AG04450 (cell line): ENCODE measurements at regions of chr12 and their contacts with region 1.

Region 1: DNA sequence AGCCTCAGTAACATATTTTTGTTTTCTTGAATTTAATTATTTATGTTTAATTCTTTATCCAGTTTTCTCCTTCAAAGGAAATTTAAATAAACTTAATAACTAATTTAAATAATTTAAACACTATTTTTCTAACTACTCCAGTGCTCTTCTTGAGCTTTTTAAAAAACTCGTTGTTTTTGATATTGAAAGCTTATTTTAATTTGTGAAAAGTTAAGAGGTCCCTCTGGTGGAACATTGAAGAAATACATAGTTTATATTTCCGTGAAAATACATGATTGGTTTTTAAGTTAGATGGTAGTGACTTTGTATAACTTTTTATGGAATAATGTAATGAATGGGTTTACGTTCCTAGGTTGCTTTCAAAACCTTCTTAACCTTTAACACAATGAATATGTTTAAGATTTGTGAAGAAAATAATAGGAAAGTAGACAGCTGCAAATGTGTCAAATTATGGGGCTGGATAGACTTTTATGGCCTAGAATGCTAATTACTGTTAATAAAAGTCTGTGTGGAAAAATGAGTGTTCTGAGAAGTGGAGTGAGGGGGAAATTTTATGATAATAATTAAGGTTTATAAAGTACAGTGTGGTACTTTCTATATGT is 45.9 kb upstream of the MSRB3 start:
- DNase-seq: no peak
- H3K4me3 ChIP-seq: no peak overlapping the region
- H3K27ac ChIP-seq: no peak overlapping the region
- H3K27me3 ChIP-seq: no peaks in the 10 kb centered on the region
- CTCF ChIP-seq: peak; percentile 52

Region 2: DNA sequence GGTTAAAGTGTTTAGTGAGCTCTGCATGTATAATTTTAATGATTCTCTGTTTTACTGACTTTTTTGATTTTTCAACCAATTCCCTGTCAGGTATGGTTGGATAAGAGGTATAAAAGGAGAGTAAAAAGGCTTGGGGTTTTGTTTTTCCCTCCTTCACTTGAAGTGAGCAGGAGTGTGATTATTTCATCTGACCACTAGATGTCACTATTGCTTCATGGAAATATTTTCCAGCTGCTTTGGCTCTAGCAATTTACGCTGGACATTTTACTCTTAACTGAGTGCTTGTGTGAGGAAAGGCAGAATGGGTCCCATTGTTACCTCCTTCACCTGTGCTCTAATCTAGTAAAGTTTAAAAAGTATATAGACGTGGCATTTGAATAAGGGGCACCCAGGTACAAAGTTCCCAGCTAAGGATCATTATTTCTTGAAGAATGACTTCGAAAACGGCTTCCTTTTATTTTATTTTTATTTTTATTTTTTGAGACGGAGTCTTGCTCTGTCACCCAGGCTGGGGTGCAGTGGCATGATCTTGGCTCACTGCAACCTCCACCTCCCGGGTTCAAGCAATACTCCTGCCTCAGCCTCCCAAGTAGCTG is 341.6 kb before region 1 on chr12:
- CTCF ChIA-PET with region 1: interaction called, 70 read pairs
- POLR2A ChIA-PET with region 1: no interaction called
- DNase-seq: no peak
- H3K4me3 ChIP-seq: no peak overlapping the region
- H3K27ac ChIP-seq: no peak overlapping the region
- H3K27me3 ChIP-seq: peaks cover 11% of the 10 kb centered on the region
- CTCF ChIP-seq: peak; percentile 70

Region 3: DNA sequence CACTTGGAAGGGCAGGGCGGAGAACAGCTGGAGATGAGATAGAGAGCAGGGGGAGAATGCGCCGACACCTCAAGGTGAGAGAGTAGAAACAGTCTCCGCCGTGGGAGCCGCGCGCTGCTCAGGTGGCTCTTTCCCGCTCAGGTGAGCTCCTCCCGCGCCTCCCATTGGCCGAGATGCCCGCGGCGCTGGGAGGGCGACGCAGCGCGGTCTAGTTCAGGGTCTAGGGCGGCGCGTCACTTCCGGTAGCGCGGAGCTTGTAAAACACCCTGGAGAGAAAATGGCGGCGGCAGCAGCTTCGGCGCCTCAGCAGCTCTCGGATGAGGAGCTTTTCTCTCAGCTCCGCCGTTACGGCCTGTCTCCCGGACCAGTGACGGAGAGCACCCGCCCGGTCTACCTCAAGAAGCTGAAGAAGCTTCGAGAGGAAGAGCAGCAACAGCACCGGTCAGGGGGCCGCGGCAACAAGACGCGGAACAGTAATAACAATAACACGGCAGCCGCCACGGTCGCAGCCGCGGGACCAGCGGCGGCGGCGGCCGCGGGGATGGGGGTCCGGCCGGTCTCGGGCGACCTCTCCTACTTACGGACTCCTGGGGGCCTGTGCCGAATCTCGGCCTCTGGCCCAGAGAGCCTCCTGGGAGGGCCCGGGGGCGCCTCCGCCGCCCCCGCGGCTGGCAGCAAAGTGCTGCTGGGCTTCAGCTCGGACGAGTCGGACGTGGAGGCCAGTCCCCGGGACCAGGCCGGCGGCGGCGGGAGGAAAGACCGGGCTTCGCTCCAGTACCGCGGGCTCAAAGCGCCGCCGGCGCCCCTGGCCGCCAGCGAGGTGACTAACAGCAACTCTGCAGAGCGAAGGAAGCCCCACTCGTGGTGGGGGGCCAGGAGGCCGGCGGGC is 63.0 kb before region 1 on chr12 and contains the start of gene LEMD3:
- CTCF ChIA-PET with region 1: interaction called, 28 read pairs
- POLR2A ChIA-PET with region 1: interaction called, 8 read pairs
- DNase-seq: peak; percentile 47
- H3K4me3 ChIP-seq: peak within 1 kb of the TSS; percentile 88
- H3K27ac ChIP-seq: peak within 1 kb of the TSS; percentile 90
- H3K27me3 ChIP-seq: no peaks in the 10 kb centered on the region
- CTCF ChIP-seq: no peak
- polyA plus RNA-seq, gene LEMD3: 9.3 and 11.9 TPM in 2 replicates

Region 4: GRCh38 chr12:65217086-65217485 is 15.5 kb before region 1 on chr12:
- CTCF ChIA-PET with region 1: interaction called, 12 read pairs
- POLR2A ChIA-PET with region 1: no interaction called
- DNase-seq: no peak
- H3K4me3 ChIP-seq: no peak overlapping the region
- H3K27ac ChIP-seq: no peak overlapping the region
- H3K27me3 ChIP-seq: no peaks in the 10 kb centered on the region
- CTCF ChIP-seq: no peak